HEK293T (cell line): ENCODE measurements at regions of chrX and their contacts with region 1.

Region 1: GRCh38 chrX:53224860-53225797 is at the start of gene KDM5C:
- DNase-seq: peak; percentile 98

Region 2: GRCh38 chrX:53237056-53237455 is 11.9 kb after region 1 on chrX:
- CTCF ChIA-PET with region 1: no interaction called
- POLR2A ChIA-PET with region 1: interaction called, 10 read pairs
- DNase-seq: no peak